Activated CD4-positive, alpha-beta memory T cell treated with anti-CD3 and anti-CD28 coated beads for 36 hours (primary cell): ENCODE measurements at regions of chr6 and their contacts with region 1.

Region 1: DNA sequence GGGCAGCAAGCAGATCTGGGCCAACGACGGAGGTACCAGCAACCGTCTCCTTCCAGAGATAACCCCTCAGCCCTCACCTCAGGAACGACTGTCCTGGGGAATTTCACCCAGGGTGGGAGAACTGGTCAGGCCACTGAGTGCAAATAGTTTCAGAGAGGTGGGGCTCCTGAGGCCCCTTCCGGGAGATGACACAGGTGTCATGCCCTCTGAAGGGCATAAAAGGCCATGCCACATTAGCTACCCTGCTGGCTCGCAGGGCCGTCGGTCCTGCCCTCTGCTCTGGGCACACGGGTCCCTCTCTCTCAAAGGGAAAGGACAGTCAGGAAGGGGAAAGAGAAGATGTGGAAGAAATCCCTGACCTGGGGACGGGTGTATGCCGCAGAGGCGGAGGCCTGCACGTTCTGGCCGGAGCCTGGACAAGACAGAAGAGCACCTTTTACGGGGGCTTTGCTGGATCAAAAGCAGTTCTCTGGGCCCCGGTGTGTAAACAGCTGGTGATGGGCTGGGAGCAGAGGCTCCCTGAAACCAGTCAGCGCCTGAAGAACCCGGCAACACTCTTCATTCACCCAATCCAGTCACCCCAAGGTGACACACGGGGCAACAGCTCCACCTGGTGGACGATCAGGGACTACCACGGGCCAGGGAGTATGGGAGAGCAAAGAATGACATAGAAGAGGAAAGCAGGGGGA is 6.4 kb upstream of the TAF8 start:
- DNase-seq: peak; percentile 96
- H3K4me3 Mint-ChIP-seq: peak overlapping the region; percentile 68
- H3K27ac Mint-ChIP-seq: peak overlapping the region; percentile 96
- H3K4me1 Mint-ChIP-seq: peaks cover 84% of the 10 kb centered on the region
- H3K27me3 Mint-ChIP-seq: no peaks in the 10 kb centered on the region

Region 2: GRCh38 chr6:41779793-41780545 is 264.0 kb before region 1 on chr6 and contains the start of gene FRS3:
- CTCF ChIA-PET with region 1: interaction called, 94 read pairs
- POLR2A ChIA-PET with region 1: no interaction called
- intact Hi-C with region 1: loop called (anchors 1 kb)
- DNase-seq: peak; percentile 99
- H3K4me3 Mint-ChIP-seq: peak within 1 kb of the TSS; percentile 85
- H3K27ac Mint-ChIP-seq: peak within 1 kb of the TSS; percentile 38
- H3K4me1 Mint-ChIP-seq: peaks cover 13% of the 10 kb centered on the region
- H3K27me3 Mint-ChIP-seq: peaks cover 6% of the 10 kb centered on the region
- total RNA-seq, gene FRS3: 4.8 to 5.5 TPM

Region 3: DNA sequence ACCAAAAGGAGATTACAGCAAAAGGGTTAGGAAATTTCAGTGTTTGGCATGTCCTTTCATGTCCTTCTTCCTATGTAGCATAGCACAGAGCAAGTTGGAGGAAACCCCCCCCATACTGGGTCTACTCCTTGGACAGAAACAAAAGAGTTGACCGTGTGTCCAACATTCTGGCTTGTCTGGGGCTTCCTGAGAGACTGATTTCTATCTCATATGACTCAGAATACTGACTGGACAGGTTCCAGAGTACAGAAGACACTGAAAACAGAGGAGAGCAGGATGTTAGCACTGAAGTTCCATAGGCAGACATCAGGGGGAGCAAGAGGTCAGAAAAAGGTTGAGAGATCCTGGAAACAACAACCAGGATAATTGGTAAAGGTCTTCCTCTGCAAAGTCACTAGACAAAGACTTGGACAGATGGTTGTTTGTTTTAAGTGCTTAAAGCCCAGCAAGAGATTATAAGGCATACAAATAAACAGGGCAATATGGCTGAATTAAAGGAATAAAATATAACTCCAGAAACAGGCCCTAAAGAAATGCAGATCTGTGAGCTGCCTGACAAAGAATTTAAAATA is 197.2 kb before region 1 on chr6:
- CTCF ChIA-PET with region 1: interaction called, 134 read pairs
- POLR2A ChIA-PET with region 1: no interaction called
- intact Hi-C with region 1: loop called (anchors 1 kb)
- DNase-seq: peak; percentile 67
- H3K4me3 Mint-ChIP-seq: no peak overlapping the region
- H3K27ac Mint-ChIP-seq: no peak overlapping the region
- H3K4me1 Mint-ChIP-seq: no peaks in the 10 kb centered on the region
- H3K27me3 Mint-ChIP-seq: no peaks in the 10 kb centered on the region

Region 4: DNA sequence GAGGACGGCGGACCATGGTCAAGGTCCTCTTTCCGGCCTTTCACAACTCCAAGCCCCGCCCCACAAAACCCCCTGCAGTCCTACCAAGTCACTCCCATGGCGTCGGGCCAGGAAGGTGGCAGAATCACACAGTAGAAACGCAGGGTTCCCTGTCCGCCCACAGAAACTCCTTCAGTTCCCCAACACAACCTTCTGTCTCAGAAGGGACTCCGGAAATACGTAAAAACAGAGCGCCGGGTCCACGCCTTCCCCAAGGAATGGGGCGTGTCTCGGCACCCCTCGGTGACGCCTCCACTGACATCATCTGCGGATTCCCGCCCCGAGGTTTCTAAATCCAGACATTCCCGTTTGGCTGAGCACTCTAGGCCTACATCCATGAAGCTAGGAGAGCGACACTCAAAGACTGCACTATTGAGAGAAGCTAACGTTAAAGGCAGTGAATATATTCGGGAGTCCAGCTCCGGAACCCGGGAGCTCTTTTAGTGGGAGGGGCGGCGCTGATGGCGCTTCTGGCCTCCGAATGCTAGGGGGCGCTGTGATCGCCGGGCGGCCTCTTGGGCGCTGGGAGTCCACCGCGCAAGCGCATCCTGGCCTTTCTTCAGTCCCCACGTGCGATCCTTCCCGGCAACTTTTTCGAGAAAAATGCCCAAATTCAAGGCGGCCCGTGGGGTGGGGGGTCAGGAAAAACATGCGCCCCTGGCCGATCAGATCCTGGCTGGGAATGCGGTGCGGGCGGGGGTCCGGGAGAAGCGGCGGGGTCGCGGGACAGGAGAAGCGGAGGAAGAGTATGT is 122.8 kb before region 1 on chr6 and contains the starts of genes BYSL and MED20:
- CTCF ChIA-PET with region 1: interaction called, 156 read pairs
- POLR2A ChIA-PET with region 1: interaction called, 6 read pairs
- intact Hi-C with region 1: loop called (anchors 1 kb)
- DNase-seq: peak; percentile 96
- H3K4me3 Mint-ChIP-seq: peak within 1 kb of the TSS; percentile 93
- H3K27ac Mint-ChIP-seq: peak within 1 kb of the TSS; percentile 96
- H3K4me1 Mint-ChIP-seq: peaks cover 49% of the 10 kb centered on the region
- H3K27me3 Mint-ChIP-seq: no peaks in the 10 kb centered on the region
- total RNA-seq, gene BYSL: 46.6 to 51.0 TPM
- total RNA-seq, gene MED20: 18.2 to 18.3 TPM

Region 5: DNA sequence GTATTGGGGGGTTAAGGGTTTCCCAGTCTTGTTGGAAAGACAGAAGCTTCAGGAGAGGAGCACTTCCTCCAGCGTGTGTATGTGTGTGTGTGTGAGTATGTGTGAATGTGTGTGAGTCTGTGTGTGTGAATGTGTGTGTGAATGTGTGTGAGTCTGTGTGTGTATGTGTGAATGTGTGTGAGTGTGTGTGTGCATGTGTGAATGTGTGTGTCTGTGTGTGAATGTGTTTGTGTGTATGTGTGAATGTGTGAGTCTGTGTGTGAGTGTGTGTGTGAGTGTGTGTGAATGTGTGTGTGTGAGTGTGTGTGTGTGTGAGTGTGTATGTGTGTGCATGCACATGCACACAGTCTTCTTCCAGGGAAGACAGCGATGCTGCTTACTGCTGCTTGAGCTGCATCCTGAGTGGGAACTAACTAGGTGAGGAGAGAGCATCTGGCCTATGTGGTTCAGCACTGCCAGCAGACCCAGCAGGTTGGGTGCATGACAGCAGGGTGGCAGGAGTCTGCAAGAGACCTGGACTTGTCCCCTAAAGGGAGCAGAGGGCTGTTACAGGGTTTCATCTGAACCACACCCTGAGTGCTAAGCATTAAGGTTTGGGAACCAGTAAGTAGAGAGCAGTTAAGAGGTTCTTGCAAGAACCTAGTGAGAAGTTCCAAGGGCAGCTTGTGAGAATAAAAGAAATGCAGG is 79.6 kb before region 1 on chr6:
- CTCF ChIA-PET with region 1: interaction called, 21 read pairs
- POLR2A ChIA-PET with region 1: interaction called, 9 read pairs
- intact Hi-C with region 1: no loop called
- DNase-seq: no peak
- H3K4me3 Mint-ChIP-seq: no peak overlapping the region
- H3K27ac Mint-ChIP-seq: peak overlapping the region; percentile 89
- H3K4me1 Mint-ChIP-seq: peaks cover 81% of the 10 kb centered on the region
- H3K27me3 Mint-ChIP-seq: no peaks in the 10 kb centered on the region

Region 6: GRCh38 chr6:42104095-42104806 is 60.3 kb after region 1 on chr6:
- CTCF ChIA-PET with region 1: interaction called, 27 read pairs
- POLR2A ChIA-PET with region 1: interaction called, 3 read pairs
- intact Hi-C with region 1: no loop called
- DNase-seq: peak; percentile 87
- H3K4me3 Mint-ChIP-seq: peak overlapping the region; percentile 65
- H3K27ac Mint-ChIP-seq: peak overlapping the region; percentile 56
- H3K4me1 Mint-ChIP-seq: peaks cover 36% of the 10 kb centered on the region
- H3K27me3 Mint-ChIP-seq: peaks cover 6% of the 10 kb centered on the region